ENCODE measurements at regions of chr1 and their contacts with region 1.

Region 1: DNA sequence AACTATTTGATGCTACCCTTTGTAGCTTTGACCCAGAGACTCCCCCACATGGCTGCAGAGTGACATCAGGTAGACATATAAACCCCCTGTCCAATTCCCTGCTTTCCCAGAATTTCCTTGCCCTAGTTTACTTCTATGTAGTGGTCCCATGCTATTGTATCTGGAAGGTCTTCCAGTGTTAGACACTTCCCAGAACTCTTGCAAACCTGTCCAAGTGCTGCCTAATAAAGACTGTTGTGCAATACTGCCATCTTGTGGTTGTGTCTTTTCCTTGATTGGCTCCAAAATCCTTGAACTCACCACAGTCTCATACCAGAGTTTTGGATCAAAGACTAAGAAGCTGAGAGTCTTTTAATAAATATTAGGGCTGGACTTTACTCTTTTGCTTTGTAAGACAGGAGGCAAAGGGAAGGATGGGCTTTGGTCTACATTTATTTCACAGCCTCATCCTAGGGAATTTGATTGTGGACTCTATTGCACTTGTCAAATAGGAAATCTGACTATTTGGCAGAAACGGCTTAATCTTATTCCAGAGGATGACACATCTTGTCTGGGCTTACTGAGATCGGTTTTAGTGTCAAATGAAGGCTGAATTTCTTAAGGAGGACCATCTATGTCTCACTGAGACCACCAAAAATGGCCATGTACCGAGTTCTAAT is 169.9 kb downstream of the LRRC7 start:
- DNase-seq: peak in 1 of 2 experiments; percentile 59
- H3K4me3 ChIP-seq: no peak overlapping the region
- H3K4me3 Mint-ChIP-seq: no peak overlapping the region
- H3K27ac Mint-ChIP-seq: no peak overlapping the region
- H3K4me1 ChIP-seq: no peaks in the 10 kb centered on the region
- H3K4me1 Mint-ChIP-seq: peaks cover 8% of the 10 kb centered on the region
- H3K27me3 ChIP-seq: no peaks in the 10 kb centered on the region
- H3K27me3 Mint-ChIP-seq: no peaks in the 10 kb centered on the region
- CTCF ChIP-seq: peak; percentile 43 to 45

Region 2: GRCh38 chr1:68470388-68470970 is 1267.2 kb before region 1 on chr1:
- CTCF ChIA-PET with region 1: no interaction called
- POLR2A ChIA-PET with region 1: no interaction called
- intact Hi-C with region 1: loop called (anchors 5 kb)
- DNase-seq: no peak
- H3K4me3 ChIP-seq: no peak overlapping the region
- H3K4me3 Mint-ChIP-seq: no peak overlapping the region
- H3K27ac Mint-ChIP-seq: no peak overlapping the region
- H3K4me1 ChIP-seq: no peaks in the 10 kb centered on the region
- H3K4me1 Mint-ChIP-seq: no peaks in the 10 kb centered on the region
- H3K27me3 ChIP-seq: no peaks in the 10 kb centered on the region
- H3K27me3 Mint-ChIP-seq: no peaks in the 10 kb centered on the region
- CTCF ChIP-seq: peak; percentile 14 to 50

Region 3: GRCh38 chr1:68819190-68819829 is 918.3 kb before region 1 on chr1:
- CTCF ChIA-PET with region 1: no interaction called
- POLR2A ChIA-PET with region 1: no interaction called
- intact Hi-C with region 1: loop called (anchors 2 kb)
- DNase-seq: peak in 1 of 2 experiments; percentile 25
- H3K4me3 ChIP-seq: no peak overlapping the region
- H3K4me3 Mint-ChIP-seq: no peak overlapping the region
- H3K27ac Mint-ChIP-seq: no peak overlapping the region
- H3K4me1 ChIP-seq: no peaks in the 10 kb centered on the region
- H3K4me1 Mint-ChIP-seq: peaks cover 6% of the 10 kb centered on the region
- H3K27me3 ChIP-seq: no peaks in the 10 kb centered on the region
- H3K27me3 Mint-ChIP-seq: peaks cover 4% of the 10 kb centered on the region
- CTCF ChIP-seq: peak; percentile 32 to 37

Region 4: DNA sequence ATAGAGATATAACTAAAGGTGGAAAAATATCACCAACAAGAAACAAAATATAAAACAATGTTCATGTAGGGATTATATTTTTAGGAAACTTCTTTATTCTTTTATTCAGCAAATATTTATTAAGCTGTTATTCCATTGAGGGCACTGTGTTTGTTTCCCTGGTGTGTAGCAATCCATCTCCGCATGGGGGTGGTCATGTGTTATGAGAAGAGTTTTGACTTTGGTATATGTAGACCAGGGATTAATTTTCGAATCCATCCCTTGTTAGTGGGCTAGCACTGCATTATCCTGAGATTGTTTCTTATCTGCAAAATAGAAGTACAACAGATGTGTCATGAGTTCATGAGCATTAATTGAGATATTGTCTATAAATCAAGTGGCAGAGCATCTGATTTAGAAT is 360.1 kb before region 1 on chr1:
- CTCF ChIA-PET with region 1: no interaction called
- POLR2A ChIA-PET with region 1: no interaction called
- intact Hi-C with region 1: loop called (anchors 1 kb)
- DNase-seq: peak in 1 of 2 experiments; percentile 4
- H3K4me3 ChIP-seq: no peak overlapping the region
- H3K4me3 Mint-ChIP-seq: no peak overlapping the region
- H3K27ac Mint-ChIP-seq: no peak overlapping the region
- H3K4me1 ChIP-seq: no peaks in the 10 kb centered on the region
- H3K4me1 Mint-ChIP-seq: peaks cover 15% of the 10 kb centered on the region
- H3K27me3 ChIP-seq: no peaks in the 10 kb centered on the region
- H3K27me3 Mint-ChIP-seq: no peaks in the 10 kb centered on the region
- CTCF ChIP-seq: peak in 1 of 2 experiments; percentile 24